A673 (cell line): ENCODE measurements at regions of chr7 and their contacts with region 1.

Region 1: DNA sequence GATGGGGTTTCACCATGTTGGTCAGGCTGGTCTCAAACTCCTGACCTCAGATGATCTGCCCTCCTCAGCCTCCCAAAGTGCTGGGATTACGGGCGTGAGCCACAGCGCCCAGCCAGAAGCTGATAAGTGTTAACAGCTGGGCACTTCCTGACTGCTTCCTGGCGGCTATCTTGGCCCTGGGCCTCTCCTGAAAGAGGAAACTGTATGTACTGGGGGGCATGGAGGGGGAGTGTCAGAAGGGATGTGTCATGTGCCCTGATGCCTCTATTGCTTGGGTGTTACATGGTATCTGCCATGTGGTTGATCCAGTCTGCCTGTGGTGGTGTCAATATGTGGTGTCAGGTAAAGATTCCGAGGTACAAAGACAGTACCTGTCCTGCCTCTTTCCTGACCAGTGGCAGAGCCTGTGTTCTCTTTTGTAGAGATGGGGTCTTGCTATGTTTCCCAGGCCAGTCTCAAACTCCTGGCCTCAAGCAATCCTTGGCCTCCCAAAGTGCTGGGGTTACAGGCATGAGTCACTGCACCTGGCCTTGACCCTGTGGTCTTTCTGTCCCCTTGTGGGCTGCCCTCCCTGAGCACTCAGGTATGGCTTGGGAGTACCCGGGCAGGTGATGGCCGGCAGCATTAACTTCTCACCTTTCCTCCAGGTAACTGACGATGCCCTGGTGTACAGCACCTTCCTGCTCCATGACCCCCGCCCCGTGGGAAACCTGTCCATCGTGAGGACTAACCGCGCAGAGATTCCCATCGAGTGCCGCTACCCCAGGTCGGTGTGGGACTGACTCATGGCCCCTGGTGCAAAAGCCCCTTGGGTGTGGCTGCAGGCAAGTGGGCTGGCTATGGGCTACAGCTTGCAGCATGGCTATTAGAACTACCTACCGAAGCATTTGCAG is 4.4 kb downstream of the ZP3 start:
- DNase-seq: peak; percentile 73
- H3K4me3 ChIP-seq: no peak overlapping the region
- H3K27ac ChIP-seq: no peak overlapping the region
- H3K4me1 ChIP-seq: no peaks in the 10 kb centered on the region
- H3K27me3 ChIP-seq: no peaks in the 10 kb centered on the region
- CTCF ChIP-seq: no peak

Region 2: GRCh38 chr7:76411626-76412025 is 17.5 kb before region 1 on chr7:
- CTCF ChIA-PET with region 1: no interaction called
- POLR2A ChIA-PET with region 1: interaction called, 12 read pairs
- intact Hi-C with region 1: no loop called
- DNase-seq: no peak
- H3K4me3 ChIP-seq: no peak overlapping the region
- H3K27ac ChIP-seq: no peak overlapping the region
- H3K4me1 ChIP-seq: no peaks in the 10 kb centered on the region
- H3K27me3 ChIP-seq: no peaks in the 10 kb centered on the region
- CTCF ChIP-seq: no peak